K562 (cell line): ENCODE measurements at regions of chr9 and their contacts with region 1.

Region 1: DNA sequence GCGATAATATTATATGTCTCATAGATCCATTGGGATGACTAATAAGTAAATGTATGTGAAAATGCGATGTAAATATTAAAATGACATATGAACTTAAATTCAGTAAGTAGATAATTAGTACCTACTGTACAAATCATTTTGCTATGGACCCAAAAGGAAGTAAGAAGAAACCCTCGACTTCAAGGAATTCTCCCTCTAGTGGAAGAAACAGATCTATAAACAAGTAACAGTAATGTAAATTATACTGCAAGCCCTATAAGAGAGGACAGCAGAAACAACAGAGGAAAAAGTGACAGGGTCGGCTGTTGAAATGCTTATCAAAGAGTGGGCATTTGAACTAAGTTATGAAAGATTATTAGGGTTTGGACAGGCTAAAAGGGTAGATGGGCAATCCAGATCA is 320.3 kb downstream of the DMAC1 start:
- DNase-seq: peak in 2 of 4 experiments; percentile 2 to 6
- ATAC-seq: no peak
- H3K4me3 ChIP-seq: no peak overlapping the region
- H3K27ac ChIP-seq: no peak overlapping the region
- H3K4me1 ChIP-seq: no peaks in the 10 kb centered on the region
- H3K27me3 ChIP-seq: no peaks in the 10 kb centered on the region
- CTCF ChIP-seq: no peak
- EP300 ChIP-seq: no peak
- POLR2A ChIP-seq: no peak
- RAD21 ChIP-seq: no peak

Region 2: DNA sequence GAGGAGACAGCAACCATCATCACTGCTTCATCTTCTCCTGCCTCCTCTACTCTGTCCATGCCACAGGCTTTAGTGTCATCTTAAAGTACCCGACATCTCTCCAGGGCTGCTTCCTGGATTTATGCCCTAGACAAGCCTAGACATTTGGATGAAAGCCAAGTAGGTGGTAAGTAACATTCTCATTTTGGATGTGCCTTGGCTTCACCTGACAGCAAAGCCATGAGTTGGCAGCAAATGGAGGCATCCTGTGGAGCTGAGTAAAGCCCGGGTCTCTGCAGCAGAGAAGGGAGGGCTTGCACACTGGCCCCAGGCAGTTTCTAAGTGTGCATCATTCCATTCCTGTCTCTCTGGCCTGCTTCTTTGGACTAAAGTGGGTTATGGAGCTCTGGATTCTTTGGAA is 21.2 kb after region 1 on chr9:
- CTCF ChIA-PET with region 1: no interaction called
- POLR2A ChIA-PET with region 1: no interaction called
- in situ Hi-C with region 1: no loop called
- intact Hi-C with region 1: loop called (anchors 1 kb)
- DNase-seq: no peak
- ATAC-seq: no peak
- H3K4me3 ChIP-seq: no peak overlapping the region
- H3K27ac ChIP-seq: no peak overlapping the region
- H3K4me1 ChIP-seq: no peaks in the 10 kb centered on the region
- H3K27me3 ChIP-seq: no peaks in the 10 kb centered on the region
- CTCF ChIP-seq: no peak
- EP300 ChIP-seq: no peak
- POLR2A ChIP-seq: no peak
- RAD21 ChIP-seq: no peak